Activated CD8-positive, alpha-beta T cell treated with anti-CD3 and anti-CD28 coated beads for 36 hours (primary cell): ENCODE measurements at regions of chr7 and their contacts with region 1.

Region 1: GRCh38 chr7:7968543-7969305 is at the start of gene GLCCI1:
- DNase-seq: peak; percentile 98
- ATAC-seq: peak; percentile 92
- H3K4me3 Mint-ChIP-seq: peak within 1 kb of the TSS; percentile 93
- H3K27ac Mint-ChIP-seq: peak within 1 kb of the TSS; percentile 92
- H3K4me1 Mint-ChIP-seq: peaks cover 27% of the 10 kb centered on the region
- H3K27me3 Mint-ChIP-seq: no peaks in the 10 kb centered on the region
- CTCF ChIP-seq: no peak
- total RNA-seq, gene GLCCI1: 11.3 to 13.0 TPM

Region 2: DNA sequence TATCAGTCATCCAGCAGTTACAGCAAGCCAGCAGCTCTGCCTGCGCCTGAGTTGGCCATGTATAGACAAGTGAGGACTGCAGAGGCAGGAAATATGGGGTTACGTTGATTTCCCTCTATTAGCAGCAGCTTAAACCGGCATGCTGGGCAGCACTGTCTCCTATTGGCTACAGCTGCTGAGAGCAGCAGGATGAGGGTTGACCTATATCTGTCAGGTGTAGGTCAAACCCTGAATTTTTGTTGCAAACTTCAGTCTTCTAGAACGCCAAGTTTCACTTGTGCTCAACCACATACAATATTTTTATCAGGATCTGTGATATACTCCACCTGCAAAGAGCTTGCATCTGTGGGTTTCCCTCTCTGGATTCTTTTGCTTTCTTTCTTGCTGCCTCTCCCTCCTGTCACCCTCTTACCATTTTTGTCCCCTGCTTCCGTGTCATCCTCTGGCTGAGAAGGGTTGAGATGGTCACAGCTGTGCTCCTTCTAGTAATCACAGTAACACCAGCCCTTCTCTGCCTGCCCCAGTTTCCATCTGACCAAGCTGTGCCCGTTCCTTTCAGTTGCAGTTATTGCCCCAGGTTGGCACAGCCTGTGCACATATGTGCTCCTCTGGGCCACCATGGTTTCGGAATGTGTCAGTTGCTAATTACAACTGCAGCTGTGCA is 24.0 kb before region 1 on chr7:
- CTCF ChIA-PET with region 1: interaction called, 6 read pairs
- POLR2A ChIA-PET with region 1: interaction called, 12 read pairs
- intact Hi-C with region 1: no loop called
- DNase-seq: peak; percentile 81
- ATAC-seq: peak; percentile 89
- H3K4me3 Mint-ChIP-seq: peak overlapping the region; percentile 37
- H3K27ac Mint-ChIP-seq: peak overlapping the region; percentile 68
- H3K4me1 Mint-ChIP-seq: peaks cover 25% of the 10 kb centered on the region
- H3K27me3 Mint-ChIP-seq: no peaks in the 10 kb centered on the region
- CTCF ChIP-seq: no peak